IMR-90 (cell line): ENCODE measurements at regions of chr9 and their contacts with region 1.

Region 1: DNA sequence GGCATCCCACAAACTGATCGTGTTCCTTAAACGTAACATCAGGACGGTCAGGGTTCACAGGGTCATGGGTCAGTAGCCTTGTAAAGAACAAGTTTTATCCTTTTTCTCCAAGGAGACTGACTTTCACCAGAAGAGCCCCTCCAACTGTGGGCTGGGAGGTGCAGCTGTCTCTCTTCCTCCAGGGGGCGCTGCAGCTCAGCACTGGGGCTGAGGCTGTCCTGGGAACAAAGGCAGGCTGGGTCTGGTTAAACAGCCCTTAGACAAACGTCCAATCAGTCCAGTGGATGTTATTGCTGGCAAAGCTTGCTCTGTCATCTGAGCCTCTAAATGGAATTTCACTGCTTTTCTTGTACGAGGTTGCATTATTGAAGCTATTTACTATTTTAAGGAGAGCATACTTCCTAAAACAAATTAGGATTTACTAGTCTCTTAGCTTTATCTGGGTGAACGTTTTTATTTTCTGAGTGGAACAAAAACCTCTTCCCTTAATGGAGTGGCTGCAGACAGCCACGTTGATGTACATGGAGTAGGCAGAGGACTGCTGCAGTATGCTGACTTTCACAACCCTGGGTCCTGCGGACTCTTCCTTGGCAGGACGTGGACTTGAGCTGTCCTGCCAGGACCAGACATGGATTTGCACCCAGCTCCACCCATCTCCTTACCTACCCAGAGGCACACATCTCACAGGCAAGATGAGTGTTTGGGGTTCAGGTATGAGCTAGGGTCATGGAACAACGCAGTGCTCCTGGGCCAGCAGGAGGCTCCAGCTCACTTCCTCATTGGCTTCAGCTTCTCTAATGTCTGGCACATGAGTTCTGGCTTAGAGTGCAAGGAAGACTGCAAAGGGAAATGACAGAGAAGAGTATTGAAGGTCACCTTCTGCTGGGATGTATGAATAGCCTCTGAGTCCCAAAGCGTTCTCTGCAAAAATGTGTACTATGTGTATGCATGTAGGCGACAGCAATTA is 7.8 kb downstream of the EXOSC2 start:
- DNase-seq: peak; percentile 88
- ATAC-seq: peak; percentile 94
- H3K4me3 ChIP-seq: no peak overlapping the region
- H3K27ac ChIP-seq: no peak overlapping the region; the same call in 1 of the 2 replicates
- H3K4me1 ChIP-seq: peaks cover 17% of the 10 kb centered on the region
- H3K27me3 ChIP-seq: no peaks in the 10 kb centered on the region
- CTCF ChIP-seq: peak; percentile 96
- POLR2A ChIP-seq: no peak
- RAD21 ChIP-seq: peak; percentile 90

Region 2: GRCh38 chr9:129557192-129558036 is 1143.9 kb before region 1 on chr9:
- CTCF ChIA-PET with region 1: no interaction called
- POLR2A ChIA-PET with region 1: interaction called, 16 read pairs
- dilution Hi-C with region 1: no loop called
- in situ Hi-C with region 1: no loop called
- intact Hi-C with region 1: no loop called
- DNase-seq: peak; percentile 74
- ATAC-seq: peak; percentile 82
- H3K4me3 ChIP-seq: no peak overlapping the region
- H3K27ac ChIP-seq: peak overlapping the region; percentile 91
- H3K4me1 ChIP-seq: peaks cover 32% of the 10 kb centered on the region
- H3K27me3 ChIP-seq: no peaks in the 10 kb centered on the region
- CTCF ChIP-seq: no peak
- POLR2A ChIP-seq: no peak
- RAD21 ChIP-seq: no peak

Region 3: DNA sequence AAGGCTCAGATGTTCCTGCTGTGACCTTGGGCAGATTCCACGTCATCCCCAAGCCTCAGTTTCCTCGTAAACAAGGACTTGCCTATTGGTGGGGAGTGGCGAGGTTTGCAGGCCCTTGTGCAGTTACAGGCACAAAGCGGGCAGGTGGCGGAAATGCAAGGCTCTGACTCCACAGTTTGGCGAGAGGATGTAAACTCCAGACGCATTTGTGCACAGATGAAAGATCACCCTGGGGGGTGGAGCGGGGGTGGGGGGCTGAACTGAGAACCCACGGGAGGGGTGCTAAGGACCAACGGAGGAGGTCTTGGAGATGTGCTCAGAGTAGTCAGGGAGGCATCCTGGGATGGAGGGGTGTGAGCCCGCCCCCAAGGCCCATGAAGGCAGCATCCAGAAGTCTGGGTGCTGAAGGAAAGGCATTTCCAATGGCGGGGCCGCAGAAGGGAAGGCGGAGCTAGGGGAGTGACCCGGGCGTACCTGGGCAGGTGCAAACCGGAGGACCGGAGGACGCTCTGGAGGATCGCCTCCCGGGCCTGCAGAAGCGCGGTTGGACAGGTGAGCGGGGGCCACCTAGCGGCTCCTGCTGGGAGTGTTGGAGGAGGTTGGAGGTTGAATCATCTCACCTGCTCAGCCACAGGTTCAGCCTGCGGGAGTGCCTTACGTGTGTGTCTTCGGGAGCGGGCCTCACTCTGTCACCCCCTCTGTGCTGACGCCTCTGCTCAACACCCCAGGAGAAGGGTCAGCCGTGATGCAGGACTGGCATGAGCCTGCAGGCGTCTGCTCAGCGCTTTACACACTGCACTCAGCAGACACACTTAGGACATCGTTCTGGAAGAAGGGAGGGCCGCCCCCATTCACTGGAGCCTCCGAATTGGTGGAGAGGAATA is 239.6 kb after region 1 on chr9:
- CTCF ChIA-PET with region 1: interaction called, 4 read pairs
- POLR2A ChIA-PET with region 1: no interaction called
- dilution Hi-C with region 1: no loop called
- in situ Hi-C with region 1: no loop called
- intact Hi-C with region 1: loop called (anchors 5 kb)
- DNase-seq: peak; percentile 15
- ATAC-seq: no peak
- H3K4me3 ChIP-seq: no peak overlapping the region
- H3K27ac ChIP-seq: no peak overlapping the region
- H3K4me1 ChIP-seq: peaks cover 15% of the 10 kb centered on the region
- H3K27me3 ChIP-seq: peaks cover 45% of the 10 kb centered on the region
- CTCF ChIP-seq: peak; percentile 72
- POLR2A ChIP-seq: no peak
- RAD21 ChIP-seq: peak; percentile 74